HepG2 (cell line): ENCODE measurements at regions of chr3 and their contacts with region 1.

Region 1: GRCh38 chr3:105933871-105934270 is 65.1 kb upstream of the CBLB start:
- DNase-seq: no peak
- ATAC-seq: no peak
- H3K4me3 ChIP-seq: no peak overlapping the region
- H3K27ac ChIP-seq: no peak overlapping the region
- H3K4me1 ChIP-seq: no peaks in the 10 kb centered on the region
- H3K27me3 ChIP-seq: no peaks in the 10 kb centered on the region; a peak in 1 of 5 replicates
- CTCF ChIP-seq: no peak
- EP300 ChIP-seq: no peak
- POLR2A ChIP-seq: no peak
- RAD21 ChIP-seq: no peak

Region 2: GRCh38 chr3:105878061-105878460 is 55.8 kb before region 1 on chr3:
- CTCF ChIA-PET with region 1: no interaction called
- POLR2A ChIA-PET with region 1: no interaction called
- in situ Hi-C with region 1: no loop called
- intact Hi-C with region 1: no loop called
- DNase-seq: no peak
- ATAC-seq: no peak
- H3K4me3 ChIP-seq: no peak overlapping the region
- H3K27ac ChIP-seq: no peak overlapping the region
- H3K4me1 ChIP-seq: no peaks in the 10 kb centered on the region
- H3K27me3 ChIP-seq: no peaks in the 10 kb centered on the region
- CTCF ChIP-seq: no peak
- EP300 ChIP-seq: no peak
- POLR2A ChIP-seq: no peak
- RAD21 ChIP-seq: no peak

Region 3: GRCh38 chr3:105960386-105960780 is 26.5 kb after region 1 on chr3:
- CTCF ChIA-PET with region 1: no interaction called
- POLR2A ChIA-PET with region 1: no interaction called
- in situ Hi-C with region 1: no loop called
- intact Hi-C with region 1: loop called (anchors 1 kb)
- DNase-seq: no peak
- ATAC-seq: no peak
- H3K4me3 ChIP-seq: no peak overlapping the region
- H3K27ac ChIP-seq: no peak overlapping the region
- H3K4me1 ChIP-seq: peaks cover 19% of the 10 kb centered on the region
- H3K27me3 ChIP-seq: no peaks in the 10 kb centered on the region
- CTCF ChIP-seq: no peak
- EP300 ChIP-seq: no peak
- POLR2A ChIP-seq: no peak
- RAD21 ChIP-seq: no peak